MCF 10A (cell line): ENCODE measurements at regions of chr4 and their contacts with region 1.

Region 1: DNA sequence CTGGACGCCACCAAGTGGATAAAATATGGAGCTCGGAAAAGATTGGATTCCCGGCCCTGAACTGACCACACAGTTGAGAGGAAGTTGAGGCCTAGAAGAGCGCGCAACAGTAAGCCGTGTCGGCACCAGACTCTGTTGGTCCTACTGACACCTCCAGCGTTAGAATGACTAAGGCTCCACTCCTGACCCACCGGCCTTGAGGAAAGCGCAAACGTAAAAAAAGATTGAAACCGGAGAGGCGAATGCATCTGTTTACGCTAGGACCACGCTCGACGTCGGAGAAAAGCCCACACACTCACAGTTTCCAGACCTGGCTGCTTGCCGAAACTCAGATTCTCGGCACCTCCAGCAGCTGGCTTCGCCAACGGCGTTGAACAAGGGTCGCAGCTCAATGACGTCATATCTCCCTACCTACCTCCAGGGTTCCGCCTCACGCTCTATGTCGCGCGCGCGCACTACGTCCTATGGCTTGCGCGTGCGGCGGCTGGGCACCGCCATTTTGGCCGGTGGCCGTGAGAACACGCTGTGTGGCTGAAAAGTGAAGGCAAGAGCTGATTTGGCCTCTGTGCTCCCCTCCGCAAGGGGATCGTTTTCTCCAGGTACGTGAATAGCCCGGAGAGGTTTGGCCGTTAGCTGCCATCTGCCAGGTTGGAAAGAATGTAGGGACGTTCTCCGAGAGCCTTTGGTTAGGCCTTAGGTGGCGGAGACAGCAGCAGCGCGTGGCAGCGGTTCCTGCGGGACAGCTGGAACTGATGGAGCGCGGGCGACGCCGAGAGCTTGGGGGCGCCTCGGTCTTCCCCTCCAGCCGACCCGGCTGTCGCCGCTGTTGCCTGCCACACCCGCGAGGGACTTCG is at the starts of genes ABCE1 and ANAPC10:
- DNase-seq: peak; percentile 98
- H3K4me3 Mint-ChIP-seq: peak within 1 kb of the TSS; percentile 94
- H3K27ac Mint-ChIP-seq: peak within 1 kb of the TSS; percentile 99
- H3K4me1 Mint-ChIP-seq: peaks cover 10% of the 10 kb centered on the region
- H3K27me3 Mint-ChIP-seq: no peaks in the 10 kb centered on the region
- CTCF ChIP-seq: peak; percentile 12
- total RNA-seq, gene ABCE1: 136 and 140 TPM in 2 replicates
- total RNA-seq, gene ANAPC10: 32.2 and 38.9 TPM in 2 replicates

Region 2: DNA sequence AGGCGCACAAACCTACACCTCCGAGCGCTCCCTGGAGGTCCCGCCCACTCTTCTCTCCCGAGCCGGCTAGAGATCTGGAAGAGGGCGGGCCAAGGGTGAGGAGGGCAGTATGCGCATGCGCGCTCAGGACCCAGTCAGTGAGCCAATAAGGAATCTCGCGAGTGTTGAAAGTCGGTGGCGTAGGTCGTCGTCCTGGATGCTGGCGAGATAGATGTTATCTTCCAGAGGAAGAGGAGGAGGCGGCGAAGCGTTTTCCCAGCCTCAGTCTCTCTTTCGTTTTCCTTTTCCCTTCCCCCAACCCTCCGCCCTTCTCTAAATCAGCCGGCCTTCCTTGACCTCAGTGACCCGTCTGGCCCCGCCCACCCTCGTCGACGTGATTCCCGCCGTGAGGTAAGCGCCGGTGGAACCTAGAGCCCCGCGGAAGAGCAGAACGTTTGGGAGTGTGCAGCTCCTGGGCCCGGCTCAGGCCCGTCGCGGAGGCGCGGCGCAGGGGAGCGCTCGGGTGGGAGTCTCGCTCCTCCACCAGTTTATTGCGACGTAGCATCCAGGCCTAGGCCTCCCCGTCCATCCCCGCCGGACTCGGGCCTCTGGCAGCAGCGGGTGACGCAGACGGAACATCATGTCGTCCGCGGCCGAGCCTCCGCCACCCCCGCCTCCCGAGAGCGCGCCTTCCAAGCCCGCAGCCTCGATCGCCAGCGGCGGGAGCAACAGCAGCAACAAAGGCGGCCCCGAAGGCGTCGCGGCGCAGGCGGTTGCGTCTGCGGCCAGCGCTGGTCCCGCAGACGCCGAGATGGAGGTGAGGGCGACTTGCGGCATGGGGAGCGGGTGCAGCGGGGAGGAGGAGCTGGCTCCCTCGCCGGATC is 1584.5 kb before region 1 on chr4 and contains the start of gene SMARCA5:
- CTCF ChIA-PET with region 1: interaction called, 5 read pairs
- POLR2A ChIA-PET with region 1: interaction called, 10 read pairs
- intact Hi-C with region 1: no loop called
- DNase-seq: peak; percentile 99
- H3K4me3 Mint-ChIP-seq: peak within 1 kb of the TSS; percentile 98
- H3K27ac Mint-ChIP-seq: peak within 1 kb of the TSS; percentile 91
- H3K4me1 Mint-ChIP-seq: peaks cover 15% of the 10 kb centered on the region
- H3K27me3 Mint-ChIP-seq: peaks cover 18% of the 10 kb centered on the region
- CTCF ChIP-seq: no peak
- total RNA-seq, gene SMARCA5: 47.2 and 49.0 TPM in 2 replicates

Region 3: GRCh38 chr4:145083891-145084605 is 14.0 kb before region 1 on chr4:
- CTCF ChIA-PET with region 1: interaction called, 7 read pairs
- POLR2A ChIA-PET with region 1: interaction called, 17 read pairs
- intact Hi-C with region 1: no loop called
- DNase-seq: no peak
- H3K4me3 Mint-ChIP-seq: no peak overlapping the region
- H3K27ac Mint-ChIP-seq: no peak overlapping the region
- H3K4me1 Mint-ChIP-seq: no peaks in the 10 kb centered on the region
- H3K27me3 Mint-ChIP-seq: no peaks in the 10 kb centered on the region
- CTCF ChIP-seq: no peak

Region 4: GRCh38 chr4:145125396-145125795 is 27.3 kb after region 1 on chr4:
- CTCF ChIA-PET with region 1: no interaction called
- POLR2A ChIA-PET with region 1: interaction called, 15 read pairs
- intact Hi-C with region 1: no loop called
- DNase-seq: no peak
- H3K4me3 Mint-ChIP-seq: no peak overlapping the region
- H3K27ac Mint-ChIP-seq: no peak overlapping the region
- H3K4me1 Mint-ChIP-seq: no peaks in the 10 kb centered on the region
- H3K27me3 Mint-ChIP-seq: no peaks in the 10 kb centered on the region
- CTCF ChIP-seq: no peak

Region 5: DNA sequence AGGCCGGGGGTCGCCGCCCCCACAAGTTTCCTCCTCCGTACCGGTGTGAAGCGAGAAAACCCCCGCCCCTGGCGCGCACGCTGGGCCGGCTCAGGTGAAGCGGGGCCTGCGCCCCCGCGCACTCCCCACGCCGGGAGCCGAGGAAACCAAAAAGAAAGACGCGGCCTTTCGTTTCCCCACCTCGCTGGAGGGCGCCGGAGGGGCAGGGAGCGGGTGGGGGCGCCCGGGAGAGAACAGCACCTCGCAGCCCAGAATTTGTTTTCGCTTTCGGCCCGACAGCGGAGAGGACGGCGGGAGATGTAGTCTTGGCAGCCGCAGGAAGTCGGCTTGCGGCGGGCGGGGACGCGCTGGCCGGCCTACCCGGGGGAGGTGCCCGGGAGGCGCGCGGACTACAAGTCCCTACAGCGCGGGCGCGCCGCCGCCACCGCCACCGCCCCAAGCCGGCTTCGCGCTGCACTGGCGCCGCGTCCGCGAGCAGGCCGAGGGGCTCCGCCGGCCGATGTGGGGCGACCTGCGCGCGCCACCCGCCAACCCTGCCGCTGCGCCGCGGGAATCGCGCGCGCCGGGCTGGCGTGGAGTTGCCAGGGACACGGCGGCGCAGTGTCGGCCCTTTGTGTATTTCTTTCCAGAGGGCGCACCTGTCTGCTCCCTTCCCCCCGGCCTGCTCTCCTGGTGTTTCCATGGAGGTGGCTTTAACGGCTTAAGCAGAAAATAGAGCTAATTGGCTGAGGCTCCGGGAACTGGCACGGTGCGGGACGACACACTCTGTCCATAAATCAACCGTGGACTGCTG is 82.4 kb after region 1 on chr4 and contains the start of gene OTUD4:
- CTCF ChIA-PET with region 1: no interaction called
- POLR2A ChIA-PET with region 1: interaction called, 63 read pairs
- intact Hi-C with region 1: no loop called
- DNase-seq: peak; percentile 92
- H3K4me3 Mint-ChIP-seq: peak within 1 kb of the TSS; percentile 73
- H3K27ac Mint-ChIP-seq: peak within 1 kb of the TSS; percentile 85
- H3K4me1 Mint-ChIP-seq: peaks cover 9% of the 10 kb centered on the region
- H3K27me3 Mint-ChIP-seq: no peaks in the 10 kb centered on the region
- CTCF ChIP-seq: no peak
- total RNA-seq, gene OTUD4: 66.2 and 68.0 TPM in 2 replicates